Right ventricle myocardium superior (tissue), 1 donor: ENCODE measurements at regions of chr19 and their contacts with region 1.

Region 1: GRCh38 chr19:52749780-52750179 is 14.9 kb upstream of the ZNF611 start:
- DNase-seq: no peak
- ATAC-seq: no peak

Region 2: DNA sequence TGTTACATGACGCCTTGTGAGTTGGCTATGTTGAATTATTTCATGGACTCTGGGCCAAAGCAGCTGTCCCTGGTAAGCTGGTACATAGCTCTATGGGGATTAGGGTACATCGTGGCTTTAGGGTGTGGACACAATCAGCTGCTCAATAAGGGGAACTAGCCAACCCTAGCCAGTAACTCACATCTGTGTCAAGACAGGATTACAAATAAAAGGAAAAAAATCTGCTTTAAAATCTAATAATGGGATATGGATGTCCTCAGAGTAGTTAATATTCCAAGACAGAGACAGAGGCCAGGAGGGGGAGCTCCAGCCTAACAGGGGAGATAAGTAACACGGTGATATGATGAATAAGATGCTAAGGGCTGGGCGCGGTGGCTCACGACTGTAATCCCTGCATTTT is 501.5 kb before region 1 on chr19:
- intact Hi-C with region 1: loop called (anchors 5 kb)
- DNase-seq: peak; percentile 60
- ATAC-seq: peak; percentile 71

Region 3: GRCh38 chr19:52917531-52917930 is 167.8 kb after region 1 on chr19:
- intact Hi-C with region 1: no loop called
- DNase-seq: no peak
- ATAC-seq: no peak

Region 4: DNA sequence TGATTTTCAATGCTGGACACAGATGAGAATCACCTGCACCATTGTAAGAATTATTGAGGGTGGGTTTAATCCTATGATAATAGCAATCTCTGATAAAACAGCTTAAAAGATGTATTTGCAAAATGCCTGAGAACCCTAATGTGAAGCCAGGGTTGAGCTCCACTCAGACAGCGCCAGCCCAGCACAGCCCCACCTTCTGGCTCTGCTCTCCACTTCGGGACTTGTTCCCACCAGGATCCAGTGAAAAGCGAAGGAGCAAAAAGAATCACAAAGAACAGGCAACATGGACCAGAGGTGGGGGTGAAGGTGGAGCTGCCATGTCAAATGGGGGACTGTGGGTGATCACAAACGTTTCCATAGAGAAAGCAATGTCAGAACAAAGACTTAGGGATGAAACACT is 231.5 kb after region 1 on chr19:
- intact Hi-C with region 1: no loop called
- DNase-seq: no peak
- ATAC-seq: no peak